ENCODE measurements at regions of chr1 and their contacts with region 1.

Region 1: GRCh38 chr1:66947267-66947666 is 22.5 kb downstream of the MIER1 start:
- DNase-seq: no peak
- H3K4me3 ChIP-seq: no peak overlapping the region
- H3K27ac ChIP-seq: no peak overlapping the region
- H3K4me1 ChIP-seq: no peaks in the 10 kb centered on the region
- CTCF ChIP-seq: no peak

Region 2: DNA sequence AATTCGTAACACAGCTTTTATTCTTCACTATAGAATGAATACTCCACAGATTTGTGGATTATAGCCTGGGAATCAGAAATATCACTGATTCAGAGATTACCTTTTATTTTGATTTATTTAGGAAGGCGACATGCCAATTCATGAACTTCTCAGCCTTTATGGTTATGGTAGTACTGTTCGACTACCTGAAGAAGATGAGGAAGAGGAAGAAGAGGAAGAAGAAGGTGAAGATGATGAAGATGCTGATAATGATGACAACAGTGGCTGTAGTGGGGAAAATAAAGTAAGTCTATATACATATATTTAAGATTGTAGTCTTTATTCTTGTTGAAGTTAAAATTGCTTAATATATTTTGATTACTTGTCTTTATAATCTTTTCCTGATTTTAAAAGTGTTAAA is 10.7 kb after region 1 on chr1:
- CTCF ChIA-PET with region 1: no interaction called
- POLR2A ChIA-PET with region 1: interaction called, 13 read pairs
- intact Hi-C with region 1: no loop called
- DNase-seq: no peak
- H3K4me3 ChIP-seq: no peak overlapping the region
- H3K27ac ChIP-seq: no peak overlapping the region
- H3K4me1 ChIP-seq: peaks cover 19% of the 10 kb centered on the region
- CTCF ChIP-seq: no peak